Colonic mucosa (tissue), 4 donors: ENCODE measurements at regions of chr7 and their contacts with region 1.

Region 1: GRCh38 chr7:104272767-104273384 is 55.5 kb upstream of the LHFPL3 start:
- DNase-seq: peak; percentile 20
- H3K4me3 ChIP-seq: no peak overlapping the region
- H3K27ac ChIP-seq: no peak overlapping the region
- H3K4me1 ChIP-seq: no peaks in the 10 kb centered on the region
- H3K27me3 ChIP-seq: no peaks in the 10 kb centered on the region
- CTCF ChIP-seq: peak; percentile 56

Region 2: GRCh38 chr7:104196161-104196560 is 76.7 kb before region 1 on chr7:
- intact Hi-C with region 1: no loop called
- DNase-seq: no peak
- H3K4me3 ChIP-seq: no peak overlapping the region
- H3K27ac ChIP-seq: no peak overlapping the region
- H3K4me1 ChIP-seq: no peaks in the 10 kb centered on the region
- H3K27me3 ChIP-seq: no peaks in the 10 kb centered on the region
- CTCF ChIP-seq: no peak

Region 3: DNA sequence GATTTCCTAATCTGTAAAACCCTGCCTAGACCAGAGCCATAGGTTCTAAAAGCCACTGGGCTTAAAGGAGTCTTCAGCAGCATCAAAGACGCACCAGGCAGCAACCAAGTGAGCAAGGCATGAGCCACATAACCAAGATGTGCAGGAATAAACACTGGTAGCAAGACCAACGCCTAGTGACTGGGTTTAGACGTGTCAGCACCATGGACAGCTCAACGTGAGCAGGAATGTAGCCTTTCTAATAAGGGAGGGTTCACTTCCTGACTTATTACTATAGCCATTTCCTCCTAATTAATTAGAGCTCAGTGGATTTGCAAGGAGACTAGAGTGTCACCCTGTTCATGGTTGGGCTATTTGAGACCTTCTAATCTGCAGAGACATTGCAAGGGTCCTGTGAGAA is 279.2 kb after region 1 on chr7:
- intact Hi-C with region 1: loop called (anchors 5 kb)
- DNase-seq: peak; percentile 43
- H3K4me3 ChIP-seq: no peak overlapping the region
- H3K27ac ChIP-seq: no peak overlapping the region
- H3K4me1 ChIP-seq: no peaks in the 10 kb centered on the region
- H3K27me3 ChIP-seq: no peaks in the 10 kb centered on the region
- CTCF ChIP-seq: no peak

Region 4: GRCh38 chr7:104848138-104848990 is 575.5 kb after region 1 on chr7:
- intact Hi-C with region 1: loop called (anchors 5 kb)
- DNase-seq: peak; percentile 64
- H3K4me3 ChIP-seq: no peak overlapping the region
- H3K27ac ChIP-seq: no peak overlapping the region
- H3K4me1 ChIP-seq: no peaks in the 10 kb centered on the region
- H3K27me3 ChIP-seq: no peaks in the 10 kb centered on the region
- CTCF ChIP-seq: peak; percentile 77

Region 5: DNA sequence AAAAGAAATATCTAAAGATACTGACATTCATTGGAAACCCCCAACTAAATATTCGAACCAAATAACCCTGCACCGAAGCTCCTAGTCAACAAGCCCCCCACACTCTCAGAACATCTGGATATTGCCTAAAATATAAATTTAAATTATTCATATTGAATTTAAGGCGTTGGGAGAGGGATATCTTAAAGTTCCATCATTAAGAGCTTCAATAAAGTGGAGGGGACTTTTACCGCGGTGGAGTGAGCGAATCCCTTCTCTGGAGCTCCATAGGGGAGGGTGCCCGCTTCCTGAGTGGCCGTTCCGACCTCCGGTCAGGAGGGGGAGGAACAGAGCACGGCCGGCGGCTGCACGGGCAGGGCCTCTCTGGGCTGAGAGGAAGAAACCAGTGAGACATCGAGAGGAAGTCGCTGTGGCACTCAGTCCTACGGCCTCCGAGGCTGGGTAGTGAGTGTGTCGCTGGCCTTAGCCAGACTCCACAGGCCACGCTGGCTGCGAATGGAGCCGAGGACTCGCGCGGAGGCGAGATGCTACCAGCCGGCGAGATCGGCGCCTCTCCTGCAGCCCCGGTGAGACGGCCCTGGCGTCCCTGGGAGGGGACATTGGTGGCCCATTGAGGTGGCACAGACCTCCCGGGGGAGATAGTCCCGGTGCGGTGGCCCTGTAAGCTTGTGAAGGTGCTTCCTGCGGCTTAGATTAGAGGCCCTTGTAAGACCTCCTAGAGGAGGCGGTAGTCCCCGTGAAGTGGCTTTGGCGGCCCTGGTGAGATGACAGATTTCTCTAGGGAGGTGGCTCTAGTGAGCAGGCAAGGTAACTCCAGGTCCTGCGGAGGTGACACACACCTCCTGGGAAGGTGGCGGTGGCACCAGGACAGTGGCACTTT is 1259.2 kb after region 1 on chr7 and contains the start of gene RINT1:
- intact Hi-C with region 1: no loop called
- DNase-seq: peak; percentile 93
- H3K4me3 ChIP-seq: peak within 1 kb of the TSS; percentile 76
- H3K27ac ChIP-seq: peak within 1 kb of the TSS; percentile 80
- H3K4me1 ChIP-seq: peaks cover 10% of the 10 kb centered on the region
- H3K27me3 ChIP-seq: no peaks in the 10 kb centered on the region
- CTCF ChIP-seq: peak; percentile 71
- total RNA-seq, gene RINT1: 13.4 to 17.2 TPM